ENCODE measurements at regions of chr10 and their contacts with region 1.

Region 1: DNA sequence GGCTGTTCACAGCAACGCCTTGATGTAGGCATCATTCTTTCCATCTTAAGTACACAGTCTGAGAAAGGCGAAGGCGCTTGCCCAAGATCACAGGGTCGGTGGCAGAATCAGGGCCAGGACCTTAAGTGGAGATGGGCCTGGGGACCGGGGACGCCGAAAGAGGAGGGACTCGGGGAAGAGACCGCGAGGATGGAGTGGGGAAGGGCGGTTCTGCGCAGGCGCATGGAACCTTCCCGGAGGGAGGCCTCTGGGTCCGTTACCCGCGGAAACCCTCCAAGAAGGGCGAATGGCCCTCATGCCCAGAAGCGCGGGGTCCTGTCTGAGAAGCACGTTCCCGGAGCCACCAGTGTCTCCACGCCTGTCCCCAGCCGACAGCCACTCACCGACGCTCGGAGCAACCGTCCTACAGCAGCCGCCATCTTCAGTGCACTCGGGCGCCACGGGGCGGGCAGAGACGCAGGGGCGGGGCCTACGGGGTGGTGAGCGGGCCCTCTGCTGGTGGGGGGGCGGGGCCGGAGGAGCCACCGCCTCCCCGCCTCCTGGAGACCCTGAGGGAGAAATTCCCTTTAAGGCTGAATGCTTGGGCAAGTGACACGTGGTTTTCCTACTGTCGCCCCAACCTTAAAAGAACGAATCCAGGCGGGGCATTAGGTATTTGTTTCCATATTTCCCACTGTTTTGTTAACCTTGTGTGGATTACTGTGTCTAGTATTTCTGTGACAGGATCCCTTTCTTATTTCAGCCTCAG is at the start of gene PRDX3:
- DNase-seq: peak; percentile 85 to 94 (median 93)
- ATAC-seq: peak; percentile 99
- H3K4me3 ChIP-seq: peak within 1 kb of the TSS; percentile 85 to 93
- H3K4me3 Mint-ChIP-seq: peak within 1 kb of the TSS; percentile 89
- H3K27ac ChIP-seq: peak within 1 kb of the TSS; percentile 73 to 75
- H3K27ac Mint-ChIP-seq: peak within 1 kb of the TSS; percentile 95
- H3K4me1 ChIP-seq: peaks cover 20% of the 10 kb centered on the region
- H3K4me1 Mint-ChIP-seq: peaks cover 35% of the 10 kb centered on the region
- H3K27me3 ChIP-seq: no peaks in the 10 kb centered on the region
- H3K27me3 Mint-ChIP-seq: no peaks in the 10 kb centered on the region
- CTCF ChIP-seq: no peak
- total RNA-seq, gene PRDX3: 7.6 to 11.7 TPM

Region 2: GRCh38 chr10:118173296-118173695 is 1005.2 kb before region 1 on chr10:
- CTCF ChIA-PET with region 1: no interaction called
- POLR2A ChIA-PET with region 1: no interaction called
- intact Hi-C with region 1: no loop called
- DNase-seq: no peak
- ATAC-seq: no peak
- H3K4me3 ChIP-seq: no peak overlapping the region
- H3K4me3 Mint-ChIP-seq: no peak overlapping the region
- H3K27ac ChIP-seq: no peak overlapping the region
- H3K27ac Mint-ChIP-seq: no peak overlapping the region
- H3K4me1 ChIP-seq: no peaks in the 10 kb centered on the region
- H3K4me1 Mint-ChIP-seq: no peaks in the 10 kb centered on the region
- H3K27me3 ChIP-seq: peaks cover 0 to 3% of the 10 kb centered on the region in 2 experiments
- H3K27me3 Mint-ChIP-seq: peaks cover 10% of the 10 kb centered on the region
- CTCF ChIP-seq: no peak

Region 3: GRCh38 chr10:118792526-118792925 is 386.0 kb before region 1 on chr10:
- CTCF ChIA-PET with region 1: no interaction called
- POLR2A ChIA-PET with region 1: no interaction called
- intact Hi-C with region 1: no loop called
- DNase-seq: peak in 1 of 9 experiments; percentile 16
- ATAC-seq: no peak
- H3K4me3 ChIP-seq: no peak overlapping the region
- H3K4me3 Mint-ChIP-seq: no peak overlapping the region
- H3K27ac ChIP-seq: no peak overlapping the region
- H3K27ac Mint-ChIP-seq: no peak overlapping the region
- H3K4me1 ChIP-seq: no peaks in the 10 kb centered on the region
- H3K4me1 Mint-ChIP-seq: no peaks in the 10 kb centered on the region
- H3K27me3 ChIP-seq: no peaks in the 10 kb centered on the region
- H3K27me3 Mint-ChIP-seq: peaks cover 11% of the 10 kb centered on the region
- CTCF ChIP-seq: no peak

Region 4: DNA sequence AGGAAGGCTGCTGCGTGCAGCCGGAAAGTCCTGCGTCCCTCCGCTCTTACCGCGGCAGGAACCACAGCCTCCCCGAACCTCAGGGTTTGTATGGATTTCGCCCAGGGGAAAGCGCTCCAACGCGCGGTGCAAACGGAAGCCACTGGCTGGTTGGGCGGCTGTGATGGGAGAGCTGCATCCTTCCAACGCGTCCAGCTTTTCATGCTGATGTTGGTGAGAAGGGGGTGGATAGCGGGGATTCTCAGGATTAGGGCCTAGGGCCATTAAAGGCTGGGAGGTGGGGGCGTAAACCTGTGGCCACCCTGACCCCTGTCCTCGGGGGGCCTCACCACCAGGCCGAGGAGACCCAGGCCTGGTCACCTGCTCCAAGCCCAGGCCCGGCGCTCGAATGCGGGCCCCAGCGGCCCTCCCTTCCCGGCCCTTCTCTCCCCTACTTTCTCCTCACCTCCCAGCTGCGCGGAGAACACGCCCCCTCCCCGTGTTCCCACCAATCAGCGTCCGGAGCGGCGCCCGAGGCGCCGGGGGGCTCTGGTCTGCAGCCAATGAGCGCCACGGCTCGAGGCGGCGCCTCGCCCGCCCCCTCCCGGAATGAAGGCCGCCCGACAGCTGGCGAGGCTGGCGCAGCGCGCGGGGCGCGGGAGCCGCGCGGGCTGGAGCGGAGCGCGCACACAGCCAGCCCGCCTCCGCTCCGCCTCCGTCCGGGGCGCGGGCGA is 149.5 kb before region 1 on chr10:
- CTCF ChIA-PET with region 1: no interaction called
- POLR2A ChIA-PET with region 1: no interaction called
- intact Hi-C with region 1: loop called (anchors 1 to 5 kb)
- DNase-seq: peak; percentile 59 to 90 (median 79)
- ATAC-seq: peak; percentile 84
- H3K4me3 ChIP-seq: peak overlapping the region; percentile 37 to 53
- H3K4me3 Mint-ChIP-seq: peak overlapping the region; percentile 77
- H3K27ac ChIP-seq: no peak overlapping the region
- H3K27ac Mint-ChIP-seq: no peak overlapping the region
- H3K4me1 ChIP-seq: peaks cover 10% of the 10 kb centered on the region
- H3K4me1 Mint-ChIP-seq: peaks cover 11% of the 10 kb centered on the region
- H3K27me3 ChIP-seq: no peaks in the 10 kb centered on the region
- H3K27me3 Mint-ChIP-seq: no peaks in the 10 kb centered on the region
- CTCF ChIP-seq: no peak

Region 5: GRCh38 chr10:119103903-119104652 is 74.5 kb before region 1 on chr10 and contains the start of gene DENND10:
- CTCF ChIA-PET with region 1: no interaction called
- POLR2A ChIA-PET with region 1: no interaction called
- intact Hi-C with region 1: loop called in 1 of 2 experiments (anchors 2 kb)
- DNase-seq: peak; percentile 55 to 88 (median 78)
- ATAC-seq: peak; percentile 85
- H3K4me3 ChIP-seq: peak within 1 kb of the TSS; percentile 46 to 49
- H3K4me3 Mint-ChIP-seq: peak within 1 kb of the TSS; percentile 90
- H3K27ac ChIP-seq: peak within 1 kb of the TSS; percentile 37 to 59
- H3K27ac Mint-ChIP-seq: peak within 1 kb of the TSS; percentile 93
- H3K4me1 ChIP-seq: peaks cover 4% of the 10 kb centered on the region
- H3K4me1 Mint-ChIP-seq: peaks cover 20% of the 10 kb centered on the region
- H3K27me3 ChIP-seq: no peaks in the 10 kb centered on the region
- H3K27me3 Mint-ChIP-seq: no peaks in the 10 kb centered on the region
- CTCF ChIP-seq: no peak
- total RNA-seq, gene DENND10: 28.8 to 30.5 TPM

Region 6: DNA sequence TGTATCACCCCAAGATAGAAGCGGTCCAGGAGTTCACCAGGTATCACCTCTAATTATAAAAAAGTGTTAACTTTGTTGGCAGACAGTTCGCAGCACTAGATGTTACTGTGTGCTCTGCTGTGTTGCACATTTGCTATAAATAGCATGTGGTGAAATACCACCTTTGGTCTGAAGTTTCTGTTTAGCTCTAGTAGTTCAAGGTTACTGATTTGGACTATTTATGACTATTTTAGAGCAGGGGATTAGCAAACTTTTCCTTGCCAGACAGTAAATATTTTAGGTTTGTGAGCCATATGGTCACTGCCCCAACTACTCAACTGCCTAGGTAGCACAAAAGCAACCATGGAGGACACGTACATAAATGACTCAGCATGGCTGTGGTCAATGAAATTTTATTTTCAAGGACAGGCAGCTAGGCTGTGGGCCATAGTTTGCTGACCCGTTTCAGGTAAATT is 58.1 kb before region 1 on chr10:
- CTCF ChIA-PET with region 1: no interaction called
- POLR2A ChIA-PET with region 1: no interaction called
- intact Hi-C with region 1: no loop called
- DNase-seq: peak in 2 of 9 experiments; percentile 61 to 79
- ATAC-seq: peak; percentile 86
- H3K4me3 ChIP-seq: no peak overlapping the region
- H3K4me3 Mint-ChIP-seq: no peak overlapping the region
- H3K27ac ChIP-seq: peak overlapping the region in 1 of 2 experiments; percentile 54
- H3K27ac Mint-ChIP-seq: peak overlapping the region; percentile 13
- H3K4me1 ChIP-seq: no peaks in the 10 kb centered on the region
- H3K4me1 Mint-ChIP-seq: peaks cover 6% of the 10 kb centered on the region
- H3K27me3 ChIP-seq: no peaks in the 10 kb centered on the region
- H3K27me3 Mint-ChIP-seq: no peaks in the 10 kb centered on the region
- CTCF ChIP-seq: no peak

Region 7: DNA sequence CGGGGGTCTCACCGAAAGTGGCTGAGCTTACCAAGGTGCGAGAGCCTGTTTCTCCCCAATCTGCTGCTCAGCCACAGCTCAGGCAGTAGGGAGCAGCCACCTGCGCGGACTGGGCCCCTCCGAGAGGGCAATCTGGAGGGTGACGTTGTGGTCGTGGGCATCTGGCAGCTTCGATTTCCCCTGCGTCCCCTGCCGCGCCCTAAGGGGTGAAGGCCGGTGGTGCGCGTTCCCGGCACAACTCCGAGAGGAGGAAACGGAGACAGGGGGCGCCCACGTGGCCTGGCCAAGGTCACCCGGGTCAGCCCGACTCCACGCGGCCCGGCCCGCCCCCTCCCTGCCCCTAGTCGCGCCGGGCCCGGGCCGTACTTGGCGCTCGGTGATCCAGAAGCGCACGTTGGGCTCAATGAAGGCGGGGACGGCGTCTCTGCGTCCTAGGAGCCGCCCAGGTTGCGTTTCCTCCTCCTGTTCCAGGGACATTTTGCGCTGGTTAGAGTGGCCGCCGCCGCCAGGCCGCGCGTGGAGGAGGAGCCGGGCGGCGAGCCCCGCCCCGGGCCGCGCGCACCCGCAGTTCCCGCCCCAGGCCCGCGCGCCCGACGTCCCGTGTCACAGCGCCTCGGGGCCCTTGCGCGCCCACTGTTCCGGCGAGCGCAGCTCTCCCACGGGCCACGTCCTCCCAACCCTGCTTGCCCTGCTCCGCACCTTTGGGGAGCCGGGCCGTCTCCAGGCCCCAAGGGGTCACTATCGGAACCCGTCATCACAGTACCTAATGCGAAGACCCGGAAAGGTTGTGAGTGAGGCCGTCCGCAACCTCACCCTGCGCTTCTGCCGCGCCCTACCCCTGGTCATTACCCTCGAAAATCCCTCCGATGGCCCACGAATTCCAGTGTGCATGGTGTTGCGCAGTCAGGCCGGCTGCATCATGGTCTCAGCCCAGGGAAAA is 13.1 kb before region 1 on chr10 and contains the start of gene SFXN4:
- CTCF ChIA-PET with region 1: interaction called, 4 read pairs
- POLR2A ChIA-PET with region 1: interaction called, 5 read pairs
- intact Hi-C with region 1: loop called (anchors 1 kb)
- DNase-seq: peak; percentile 59 to 89 (median 77)
- ATAC-seq: peak; percentile 93
- H3K4me3 ChIP-seq: peak within 1 kb of the TSS; percentile 49 to 80
- H3K4me3 Mint-ChIP-seq: peak within 1 kb of the TSS; percentile 95
- H3K27ac ChIP-seq: peak within 1 kb of the TSS; percentile 61 to 71
- H3K27ac Mint-ChIP-seq: peak within 1 kb of the TSS; percentile 96
- H3K4me1 ChIP-seq: peaks cover 18% of the 10 kb centered on the region
- H3K4me1 Mint-ChIP-seq: peaks cover 34% of the 10 kb centered on the region
- H3K27me3 ChIP-seq: no peaks in the 10 kb centered on the region
- H3K27me3 Mint-ChIP-seq: no peaks in the 10 kb centered on the region
- CTCF ChIP-seq: no peak
- total RNA-seq, gene SFXN4: 10.5 to 10.8 TPM

Region 8: GRCh38 chr10:119737827-119738226 is 559.3 kb after region 1 on chr10:
- CTCF ChIA-PET with region 1: no interaction called
- POLR2A ChIA-PET with region 1: no interaction called
- intact Hi-C with region 1: no loop called
- DNase-seq: no peak
- ATAC-seq: peak; percentile 65
- H3K4me3 ChIP-seq: no peak overlapping the region
- H3K4me3 Mint-ChIP-seq: no peak overlapping the region
- H3K27ac ChIP-seq: no peak overlapping the region
- H3K27ac Mint-ChIP-seq: no peak overlapping the region
- H3K4me1 ChIP-seq: peaks cover 10% of the 10 kb centered on the region
- H3K4me1 Mint-ChIP-seq: peaks cover 19% of the 10 kb centered on the region
- H3K27me3 ChIP-seq: no peaks in the 10 kb centered on the region
- H3K27me3 Mint-ChIP-seq: no peaks in the 10 kb centered on the region
- CTCF ChIP-seq: no peak